BJ (cell line): ENCODE measurements at regions of chr3 and their contacts with region 1.

Region 1: GRCh38 chr3:52536369-52537164 is at the start of gene UQCC5:
- DNase-seq: peak; percentile 91
- H3K4me3 ChIP-seq: peak within 1 kb of the TSS; percentile 78
- H3K27me3 ChIP-seq: no peaks in the 10 kb centered on the region
- CTCF ChIP-seq: peak; percentile 36
- polyA plus RNA-seq, gene UQCC5: 11.9 and 12.3 TPM in 2 replicates

Region 2: GRCh38 chr3:52645549-52645948 is 109.0 kb after region 1 on chr3:
- CTCF ChIA-PET with region 1: no interaction called
- POLR2A ChIA-PET with region 1: interaction called, 23 read pairs
- DNase-seq: no peak
- H3K4me3 ChIP-seq: no peak overlapping the region
- H3K27me3 ChIP-seq: no peaks in the 10 kb centered on the region
- CTCF ChIP-seq: no peak